ENCODE measurements at regions of chr9 and their contacts with region 1.

Region 1: GRCh38 chr9:96418074-96418809 is at the start of gene ZNF367:
- DNase-seq: peak; percentile 76 to 95 (median 90)
- ATAC-seq: peak; percentile 65
- H3K4me3 ChIP-seq: peak within 1 kb of the TSS; percentile 97
- H3K4me3 Mint-ChIP-seq: peak within 1 kb of the TSS; percentile 93
- H3K27ac ChIP-seq: peak within 1 kb of the TSS; percentile 93 to 94
- H3K27ac Mint-ChIP-seq: peak within 1 kb of the TSS; percentile 93
- H3K4me1 ChIP-seq: peaks cover 39% of the 10 kb centered on the region
- H3K4me1 Mint-ChIP-seq: peaks cover 36% of the 10 kb centered on the region
- H3K27me3 ChIP-seq: no peaks in the 10 kb centered on the region
- H3K27me3 Mint-ChIP-seq: no peaks in the 10 kb centered on the region
- CTCF ChIP-seq: no peak
- total RNA-seq, gene ZNF367: 6.5 to 6.7 TPM

Region 2: DNA sequence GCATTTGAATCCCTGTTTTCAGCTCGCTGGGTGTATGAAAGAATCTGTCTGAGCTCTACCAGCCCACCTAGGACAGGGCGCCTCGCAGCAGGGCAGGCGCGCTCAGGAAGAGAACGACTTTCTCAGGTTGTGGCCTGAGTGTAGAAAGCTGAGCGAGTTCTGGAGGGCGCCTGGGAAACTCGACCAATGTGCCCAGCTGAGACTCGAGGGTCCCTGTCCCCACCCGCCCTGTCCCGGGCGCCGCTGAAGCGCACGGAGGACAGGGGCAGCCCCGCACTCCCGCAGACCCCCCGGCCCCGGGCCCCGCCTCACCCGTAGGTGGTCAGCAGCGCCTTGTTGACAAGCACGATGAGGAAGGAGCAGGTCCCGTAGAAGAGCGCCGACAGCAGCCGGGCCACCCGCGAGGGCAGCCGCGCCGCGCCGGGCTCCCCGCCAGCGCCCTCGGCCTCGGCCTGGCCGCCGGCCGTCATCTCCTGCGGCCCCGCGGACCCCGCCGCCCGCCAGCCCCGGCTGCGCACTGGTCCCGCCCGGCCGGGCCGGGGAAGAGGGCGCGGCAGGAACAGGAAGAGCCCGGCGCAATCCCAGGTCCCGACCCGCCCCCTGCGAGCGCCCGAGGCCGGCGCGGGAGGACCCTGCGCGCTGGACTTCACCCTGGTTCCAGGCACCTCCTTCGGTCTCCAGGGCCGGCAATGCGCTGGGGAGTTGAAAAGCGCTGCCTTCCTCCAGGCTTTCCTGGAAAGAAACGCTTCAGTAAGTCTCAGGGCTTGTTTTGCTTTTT is 34.9 kb before region 1 on chr9 and contains the start of gene SLC35D2:
- CTCF ChIA-PET with region 1: no interaction called
- POLR2A ChIA-PET with region 1: interaction called, 7 read pairs
- intact Hi-C with region 1: loop called (anchors 5 kb)
- DNase-seq: peak in 6 of 14 experiments; percentile 4 to 45 (median 21)
- ATAC-seq: peak; percentile 48
- H3K4me3 ChIP-seq: peak within 1 kb of the TSS; percentile 54
- H3K4me3 Mint-ChIP-seq: peak within 1 kb of the TSS; percentile 90
- H3K27ac ChIP-seq: no peak within 1 kb of the TSS
- H3K27ac Mint-ChIP-seq: peak within 1 kb of the TSS; percentile 84
- H3K4me1 ChIP-seq: peaks cover 28% of the 10 kb centered on the region
- H3K4me1 Mint-ChIP-seq: peaks cover 27% of the 10 kb centered on the region
- H3K27me3 ChIP-seq: no peaks in the 10 kb centered on the region
- H3K27me3 Mint-ChIP-seq: no peaks in the 10 kb centered on the region
- CTCF ChIP-seq: no peak
- total RNA-seq, gene SLC35D2: 13.2 to 14.7 TPM

Region 3: GRCh38 chr9:96398582-96399324 is 19.5 kb before region 1 on chr9:
- CTCF ChIA-PET with region 1: interaction called, 5 read pairs
- POLR2A ChIA-PET with region 1: interaction called, 20 read pairs
- intact Hi-C with region 1: no loop called
- DNase-seq: peak in 5 of 14 experiments; percentile 17 to 67 (median 38)
- ATAC-seq: peak; percentile 79
- H3K4me3 ChIP-seq: no peak overlapping the region
- H3K4me3 Mint-ChIP-seq: peak overlapping the region; percentile 74
- H3K27ac ChIP-seq: peak overlapping the region; percentile 48 to 79
- H3K27ac Mint-ChIP-seq: peak overlapping the region; percentile 92
- H3K4me1 ChIP-seq: peaks cover 23% of the 10 kb centered on the region
- H3K4me1 Mint-ChIP-seq: peaks cover 25% of the 10 kb centered on the region
- H3K27me3 ChIP-seq: no peaks in the 10 kb centered on the region
- H3K27me3 Mint-ChIP-seq: no peaks in the 10 kb centered on the region
- CTCF ChIP-seq: no peak

Region 4: GRCh38 chr9:96449845-96450612 is 31.8 kb after region 1 on chr9 and contains the start of gene HABP4:
- CTCF ChIA-PET with region 1: interaction called, 4 read pairs
- POLR2A ChIA-PET with region 1: interaction called, 66 read pairs
- intact Hi-C with region 1: loop called (anchors 1 to 2 kb)
- DNase-seq: peak; percentile 89 to 98 (median 95)
- ATAC-seq: peak; percentile 90
- H3K4me3 ChIP-seq: peak within 1 kb of the TSS; percentile 89
- H3K4me3 Mint-ChIP-seq: peak within 1 kb of the TSS; percentile 95
- H3K27ac ChIP-seq: peak within 1 kb of the TSS in 1 of 2 donors; percentile 17
- H3K27ac Mint-ChIP-seq: peak within 1 kb of the TSS; percentile 86
- H3K4me1 ChIP-seq: peaks cover 27% of the 10 kb centered on the region
- H3K4me1 Mint-ChIP-seq: peaks cover 27% of the 10 kb centered on the region
- H3K27me3 ChIP-seq: no peaks in the 10 kb centered on the region
- H3K27me3 Mint-ChIP-seq: peaks cover 7% of the 10 kb centered on the region
- CTCF ChIP-seq: no peak
- total RNA-seq, gene HABP4: 29.7 to 31.7 TPM

Region 5: DNA sequence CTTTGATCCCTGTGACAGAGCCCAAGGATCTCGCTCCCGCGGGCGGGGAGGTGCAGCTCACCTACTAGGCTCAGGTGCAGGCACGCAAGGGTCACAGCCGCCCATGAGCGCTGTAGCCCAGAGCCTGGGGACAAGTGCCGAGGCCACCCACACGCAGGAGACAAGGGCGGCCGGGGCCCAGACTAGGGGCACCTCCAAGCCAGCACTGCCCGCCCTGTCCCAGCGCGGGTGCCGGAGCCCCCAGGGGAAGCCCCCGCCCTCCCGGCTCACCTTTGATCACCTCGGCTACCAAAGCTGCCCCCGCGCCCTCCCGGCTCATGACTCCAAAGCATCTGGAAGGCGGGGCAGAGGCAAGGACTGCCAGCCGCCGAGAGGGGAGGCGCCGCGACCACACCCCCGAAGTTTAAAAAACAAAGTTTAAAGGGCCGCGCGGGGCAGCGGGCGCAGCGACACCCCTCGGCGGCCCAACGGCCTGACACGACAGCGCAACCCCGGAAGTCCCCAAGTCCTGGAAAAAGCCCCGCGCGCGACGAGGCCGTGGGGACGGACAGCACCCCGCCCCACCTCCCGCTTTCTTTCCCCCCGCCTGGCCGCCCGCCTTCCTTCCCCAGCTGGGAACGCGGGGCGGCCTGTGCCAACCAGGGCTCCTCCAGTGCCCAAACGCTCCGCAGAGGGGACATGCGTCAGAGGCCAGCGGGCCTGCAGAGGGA is 148.4 kb after region 1 on chr9:
- CTCF ChIA-PET with region 1: no interaction called
- POLR2A ChIA-PET with region 1: interaction called, 5 read pairs
- intact Hi-C with region 1: loop called in 1 of 2 experiments (anchors 2 kb)
- DNase-seq: peak; percentile 65 to 92 (median 78)
- ATAC-seq: peak; percentile 83
- H3K4me3 ChIP-seq: peak overlapping the region; percentile 85
- H3K4me3 Mint-ChIP-seq: peak overlapping the region; percentile 85
- H3K27ac ChIP-seq: peak overlapping the region; percentile 64 to 73
- H3K27ac Mint-ChIP-seq: peak overlapping the region; percentile 62
- H3K4me1 ChIP-seq: peaks cover 15% of the 10 kb centered on the region
- H3K4me1 Mint-ChIP-seq: peaks cover 31% of the 10 kb centered on the region
- H3K27me3 ChIP-seq: no peaks in the 10 kb centered on the region
- H3K27me3 Mint-ChIP-seq: no peaks in the 10 kb centered on the region
- CTCF ChIP-seq: peak; percentile 82

Region 6: DNA sequence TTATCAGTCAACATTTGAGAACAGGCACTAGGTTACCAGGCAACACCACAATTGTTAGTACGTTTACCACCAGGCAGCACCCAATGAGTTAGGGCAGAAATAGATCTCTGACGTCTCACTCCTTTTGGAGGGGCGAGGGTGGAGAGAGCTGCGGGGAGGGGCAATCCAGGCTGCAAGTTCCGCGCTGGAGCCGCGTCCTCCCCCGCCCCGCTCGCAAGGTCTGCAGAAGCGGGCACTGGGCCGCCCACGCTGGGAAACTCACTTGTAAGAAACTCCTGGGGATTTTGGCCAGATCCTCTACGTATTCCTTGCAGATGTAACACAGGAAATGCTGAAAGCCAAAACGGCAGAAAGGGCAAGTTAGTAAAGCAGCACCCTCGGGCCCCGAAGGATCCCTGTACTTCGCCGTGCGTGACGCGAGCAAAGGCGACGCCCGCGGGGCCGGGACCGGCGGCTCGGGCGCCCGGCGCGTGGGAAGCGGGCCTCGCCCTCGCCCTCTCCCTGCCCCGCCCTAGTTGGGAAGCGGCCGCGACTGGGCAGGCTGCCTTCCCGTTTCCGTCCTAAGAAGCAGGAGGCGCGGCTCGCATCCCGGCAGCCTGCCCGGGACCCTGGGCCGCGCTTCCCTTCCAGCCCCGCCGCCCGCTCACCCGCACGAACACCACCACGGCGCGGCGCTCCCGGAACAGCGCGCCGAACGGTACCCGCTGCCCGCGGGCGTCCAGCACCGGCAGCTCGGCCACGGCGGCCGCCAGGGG is 236.4 kb after region 1 on chr9:
- CTCF ChIA-PET with region 1: no interaction called
- POLR2A ChIA-PET with region 1: no interaction called
- intact Hi-C with region 1: loop called in 1 of 2 experiments (anchors 2 kb)
- DNase-seq: peak; percentile 43 to 94 (median 72)
- ATAC-seq: peak; percentile 87
- H3K4me3 ChIP-seq: peak overlapping the region; percentile 58
- H3K4me3 Mint-ChIP-seq: peak overlapping the region; percentile 90
- H3K27ac ChIP-seq: peak overlapping the region; percentile 52 to 73
- H3K27ac Mint-ChIP-seq: peak overlapping the region; percentile 93
- H3K4me1 ChIP-seq: peaks cover 20% of the 10 kb centered on the region
- H3K4me1 Mint-ChIP-seq: peaks cover 32% of the 10 kb centered on the region
- H3K27me3 ChIP-seq: no peaks in the 10 kb centered on the region
- H3K27me3 Mint-ChIP-seq: no peaks in the 10 kb centered on the region
- CTCF ChIP-seq: no peak